CD8-positive, alpha-beta T cell (primary cell): ENCODE measurements at regions of chr12 and their contacts with region 1.

Region 1: DNA sequence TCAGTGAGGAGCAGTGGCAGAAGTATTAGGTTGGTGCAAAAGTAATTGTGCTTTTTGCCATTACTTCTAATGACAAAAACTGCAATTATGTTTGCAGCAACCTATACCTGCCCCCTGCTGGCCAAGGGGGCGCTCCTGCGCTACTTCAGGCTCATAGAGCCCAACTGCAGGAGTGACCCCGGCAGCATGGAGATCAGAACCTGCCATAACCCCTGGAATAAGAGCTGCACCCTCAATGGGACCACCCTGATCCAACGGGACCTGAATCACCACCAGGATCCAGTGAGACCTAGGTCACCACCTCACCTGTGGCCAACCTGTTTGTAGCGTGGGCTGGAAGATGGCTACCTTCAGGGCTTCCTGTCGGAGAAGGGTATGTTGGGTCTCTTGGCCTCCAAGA is 8.2 kb upstream of the C12orf42 start:
- DNase-seq: peak; percentile 39 to 78 (median 65)
- ATAC-seq: peak; percentile 73
- H3K4me3 ChIP-seq: no peak overlapping the region
- H3K4me3 Mint-ChIP-seq: no peak overlapping the region
- H3K27ac ChIP-seq: no peak overlapping the region
- H3K27ac Mint-ChIP-seq: no peak overlapping the region
- H3K4me1 ChIP-seq: no peaks in the 10 kb centered on the region
- H3K4me1 Mint-ChIP-seq: peaks cover 4% of the 10 kb centered on the region
- H3K27me3 ChIP-seq: no peaks in the 10 kb centered on the region
- H3K27me3 Mint-ChIP-seq: no peaks in the 10 kb centered on the region
- CTCF ChIP-seq: peak; percentile 61

Region 2: GRCh38 chr12:102883204-102883799 is 620.7 kb before region 1 on chr12:
- CTCF ChIA-PET with region 1: interaction called, 6 read pairs
- POLR2A ChIA-PET with region 1: no interaction called
- intact Hi-C with region 1: loop called in 1 of 2 experiments (anchors 1 kb)
- DNase-seq: peak in 6 of 9 experiments; percentile 9 to 52 (median 34)
- ATAC-seq: no peak
- H3K4me3 ChIP-seq: no peak overlapping the region
- H3K4me3 Mint-ChIP-seq: no peak overlapping the region
- H3K27ac ChIP-seq: no peak overlapping the region
- H3K27ac Mint-ChIP-seq: no peak overlapping the region
- H3K4me1 ChIP-seq: no peaks in the 10 kb centered on the region
- H3K4me1 Mint-ChIP-seq: no peaks in the 10 kb centered on the region
- H3K27me3 ChIP-seq: no peaks in the 10 kb centered on the region
- H3K27me3 Mint-ChIP-seq: peaks cover 21% of the 10 kb centered on the region
- CTCF ChIP-seq: peak; percentile 61

Region 3: DNA sequence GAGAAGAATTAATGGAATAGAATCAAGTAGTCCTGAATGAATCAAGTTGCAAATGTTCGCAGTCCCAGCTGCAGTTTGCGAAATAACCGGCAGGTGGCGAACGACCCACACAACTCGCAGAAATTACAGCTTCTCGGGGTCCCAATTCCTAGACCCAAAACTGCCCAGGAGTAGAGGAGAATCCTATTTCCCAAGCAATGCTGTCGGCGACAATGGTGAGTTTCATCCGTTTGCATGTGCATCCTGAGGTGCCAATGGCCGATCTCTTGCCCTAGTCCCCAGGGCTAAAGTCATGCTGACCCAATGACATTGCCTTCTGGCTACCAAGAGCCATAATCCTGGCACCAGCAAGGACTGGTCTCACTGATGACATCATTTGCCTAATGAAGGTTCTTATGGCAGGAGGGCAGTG is 555.0 kb before region 1 on chr12:
- CTCF ChIA-PET with region 1: interaction called, 48 read pairs
- POLR2A ChIA-PET with region 1: no interaction called
- intact Hi-C with region 1: loop called (anchors 1 kb)
- DNase-seq: peak in 8 of 9 experiments; percentile 24 to 70 (median 56)
- ATAC-seq: no peak
- H3K4me3 ChIP-seq: no peak overlapping the region
- H3K4me3 Mint-ChIP-seq: no peak overlapping the region
- H3K27ac ChIP-seq: no peak overlapping the region
- H3K27ac Mint-ChIP-seq: no peak overlapping the region
- H3K4me1 ChIP-seq: no peaks in the 10 kb centered on the region
- H3K4me1 Mint-ChIP-seq: peaks cover 4% of the 10 kb centered on the region
- H3K27me3 ChIP-seq: peaks cover 6 to 8% of the 10 kb centered on the region in 2 experiments
- H3K27me3 Mint-ChIP-seq: peaks cover 50% of the 10 kb centered on the region
- CTCF ChIP-seq: peak; percentile 94

Region 4: GRCh38 chr12:103326190-103326589 is 177.8 kb before region 1 on chr12:
- CTCF ChIA-PET with region 1: interaction called, 4 read pairs
- POLR2A ChIA-PET with region 1: no interaction called
- intact Hi-C with region 1: loop called (anchors 1 to 5 kb)
- DNase-seq: peak in 1 of 9 experiments; percentile 11
- ATAC-seq: no peak
- H3K4me3 ChIP-seq: no peak overlapping the region
- H3K4me3 Mint-ChIP-seq: no peak overlapping the region
- H3K27ac ChIP-seq: no peak overlapping the region
- H3K27ac Mint-ChIP-seq: no peak overlapping the region
- H3K4me1 ChIP-seq: no peaks in the 10 kb centered on the region
- H3K4me1 Mint-ChIP-seq: no peaks in the 10 kb centered on the region
- H3K27me3 ChIP-seq: no peaks in the 10 kb centered on the region
- H3K27me3 Mint-ChIP-seq: no peaks in the 10 kb centered on the region
- CTCF ChIP-seq: no peak

Region 5: GRCh38 chr12:103348935-103349334 is 155.0 kb before region 1 on chr12:
- CTCF ChIA-PET with region 1: no interaction called
- POLR2A ChIA-PET with region 1: no interaction called
- intact Hi-C with region 1: no loop called
- DNase-seq: peak in 1 of 9 experiments; percentile 5
- ATAC-seq: no peak
- H3K4me3 ChIP-seq: no peak overlapping the region
- H3K4me3 Mint-ChIP-seq: no peak overlapping the region
- H3K27ac ChIP-seq: no peak overlapping the region
- H3K27ac Mint-ChIP-seq: peak overlapping the region; percentile 46
- H3K4me1 ChIP-seq: no peaks in the 10 kb centered on the region
- H3K4me1 Mint-ChIP-seq: peaks cover 10% of the 10 kb centered on the region
- H3K27me3 ChIP-seq: no peaks in the 10 kb centered on the region
- H3K27me3 Mint-ChIP-seq: no peaks in the 10 kb centered on the region
- CTCF ChIP-seq: no peak

Region 6: GRCh38 chr12:103401421-103401820 is 102.6 kb before region 1 on chr12:
- CTCF ChIA-PET with region 1: interaction called, 12 read pairs
- POLR2A ChIA-PET with region 1: no interaction called
- intact Hi-C with region 1: loop called (anchors 2 kb)
- DNase-seq: peak in 2 of 9 experiments; percentile 12 to 32
- ATAC-seq: no peak
- H3K4me3 ChIP-seq: no peak overlapping the region
- H3K4me3 Mint-ChIP-seq: no peak overlapping the region
- H3K27ac ChIP-seq: no peak overlapping the region
- H3K27ac Mint-ChIP-seq: no peak overlapping the region
- H3K4me1 ChIP-seq: no peaks in the 10 kb centered on the region
- H3K4me1 Mint-ChIP-seq: peaks cover 2% of the 10 kb centered on the region
- H3K27me3 ChIP-seq: no peaks in the 10 kb centered on the region
- H3K27me3 Mint-ChIP-seq: no peaks in the 10 kb centered on the region
- CTCF ChIP-seq: no peak

Region 7: DNA sequence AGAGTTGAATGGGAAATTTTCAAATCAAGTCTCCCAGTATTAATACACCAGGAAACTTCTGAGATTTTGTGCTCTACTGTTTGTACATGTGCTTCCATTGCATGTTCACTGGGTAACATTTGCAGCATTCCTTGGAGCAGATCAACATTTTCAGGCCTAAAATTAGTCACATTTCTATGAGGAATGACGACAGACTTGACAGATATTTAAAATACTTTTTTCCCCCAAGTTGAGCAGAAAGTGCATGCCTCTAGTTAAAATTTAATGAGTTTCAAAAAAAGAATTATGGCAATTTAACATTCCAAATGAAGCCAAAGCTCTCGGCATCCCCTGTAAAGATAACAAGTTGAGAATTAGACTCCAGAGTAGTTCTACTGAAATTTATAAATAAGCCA is 80.5 kb before region 1 on chr12:
- CTCF ChIA-PET with region 1: interaction called, 10 read pairs
- POLR2A ChIA-PET with region 1: interaction called, 4 read pairs
- intact Hi-C with region 1: no loop called
- DNase-seq: no peak
- ATAC-seq: no peak
- H3K4me3 ChIP-seq: no peak overlapping the region
- H3K4me3 Mint-ChIP-seq: no peak overlapping the region
- H3K27ac ChIP-seq: no peak overlapping the region
- H3K27ac Mint-ChIP-seq: no peak overlapping the region
- H3K4me1 ChIP-seq: no peaks in the 10 kb centered on the region
- H3K4me1 Mint-ChIP-seq: peaks cover 3% of the 10 kb centered on the region
- H3K27me3 ChIP-seq: no peaks in the 10 kb centered on the region
- H3K27me3 Mint-ChIP-seq: no peaks in the 10 kb centered on the region
- CTCF ChIP-seq: no peak

Region 8: DNA sequence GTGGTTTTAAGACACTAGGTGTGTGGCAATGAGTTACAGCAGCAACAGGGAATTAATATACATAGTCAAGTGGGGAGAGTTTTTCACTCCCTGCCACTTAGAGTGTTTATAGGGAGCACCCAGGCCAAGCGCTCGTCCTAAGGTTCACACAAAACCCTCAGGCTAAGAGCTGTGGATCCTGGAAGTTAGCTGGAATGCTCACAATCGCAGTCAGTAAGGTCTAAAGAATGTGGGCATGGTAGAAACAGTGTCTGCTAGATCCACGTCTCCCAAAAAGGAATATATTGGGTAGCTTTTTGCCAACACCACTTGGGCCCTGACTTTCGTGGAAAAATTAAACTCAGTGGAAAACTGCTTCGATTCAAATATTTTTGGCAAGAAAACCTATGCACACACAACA is 119.7 kb after region 1 on chr12:
- CTCF ChIA-PET with region 1: no interaction called
- POLR2A ChIA-PET with region 1: no interaction called
- intact Hi-C with region 1: no loop called
- DNase-seq: no peak
- ATAC-seq: no peak
- H3K4me3 ChIP-seq: no peak overlapping the region
- H3K4me3 Mint-ChIP-seq: no peak overlapping the region
- H3K27ac ChIP-seq: no peak overlapping the region
- H3K27ac Mint-ChIP-seq: no peak overlapping the region
- H3K4me1 ChIP-seq: no peaks in the 10 kb centered on the region
- H3K4me1 Mint-ChIP-seq: no peaks in the 10 kb centered on the region
- H3K27me3 ChIP-seq: no peaks in the 10 kb centered on the region
- H3K27me3 Mint-ChIP-seq: peaks cover 5% of the 10 kb centered on the region
- CTCF ChIP-seq: no peak